ENCODE measurements at regions of chr2 and their contacts with region 1.

Region 1: GRCh38 chr2:86221066-86221684 is 21.9 kb downstream of the MRPL35 start:
- H3K4me3 Mint-ChIP-seq: no peak overlapping the region
- H3K27ac Mint-ChIP-seq: no peak overlapping the region
- H3K4me1 Mint-ChIP-seq: peaks cover 15% of the 10 kb centered on the region
- H3K27me3 Mint-ChIP-seq: no peaks in the 10 kb centered on the region

Region 2: DNA sequence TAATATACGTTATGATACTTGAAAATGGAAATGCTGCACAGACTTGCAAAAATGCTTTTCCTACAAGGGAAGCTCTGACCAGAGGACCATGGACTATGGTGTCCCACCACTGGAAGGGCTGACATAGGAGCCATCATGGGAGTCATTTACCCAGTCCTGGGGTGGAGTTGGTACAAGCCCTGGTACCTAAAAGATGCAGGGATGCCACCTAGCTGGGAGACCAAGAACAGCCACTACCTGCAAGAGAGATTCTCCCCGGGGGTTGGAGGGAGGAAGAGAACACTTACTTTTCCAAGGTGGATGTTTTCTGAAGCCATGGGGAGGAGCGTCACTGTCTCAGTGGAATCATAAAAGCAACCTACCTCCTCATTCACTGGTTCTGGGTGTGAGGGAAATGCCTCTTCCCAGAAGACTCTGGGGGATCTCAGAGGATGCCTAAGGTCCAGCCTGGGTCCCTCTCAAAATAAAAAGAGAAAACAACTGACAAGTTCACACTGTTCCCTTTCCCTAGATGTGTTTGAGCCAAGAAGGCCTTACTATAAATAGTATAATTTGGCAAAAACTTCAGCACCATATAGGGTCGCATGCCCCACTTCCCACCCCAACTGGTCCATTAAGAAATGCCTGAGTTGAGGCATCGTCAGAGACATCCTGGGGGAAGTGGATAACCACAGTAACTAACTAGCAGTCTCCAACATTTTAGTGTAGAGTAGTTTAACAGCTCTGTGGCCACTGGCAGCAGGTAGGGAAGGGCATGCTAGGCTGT is 76.4 kb after region 1 on chr2:
- intact Hi-C with region 1: loop called (anchors 2 kb)
- H3K4me3 Mint-ChIP-seq: no peak overlapping the region
- H3K27ac Mint-ChIP-seq: no peak overlapping the region
- H3K4me1 Mint-ChIP-seq: no peaks in the 10 kb centered on the region
- H3K27me3 Mint-ChIP-seq: peaks cover 33% of the 10 kb centered on the region

Region 3: DNA sequence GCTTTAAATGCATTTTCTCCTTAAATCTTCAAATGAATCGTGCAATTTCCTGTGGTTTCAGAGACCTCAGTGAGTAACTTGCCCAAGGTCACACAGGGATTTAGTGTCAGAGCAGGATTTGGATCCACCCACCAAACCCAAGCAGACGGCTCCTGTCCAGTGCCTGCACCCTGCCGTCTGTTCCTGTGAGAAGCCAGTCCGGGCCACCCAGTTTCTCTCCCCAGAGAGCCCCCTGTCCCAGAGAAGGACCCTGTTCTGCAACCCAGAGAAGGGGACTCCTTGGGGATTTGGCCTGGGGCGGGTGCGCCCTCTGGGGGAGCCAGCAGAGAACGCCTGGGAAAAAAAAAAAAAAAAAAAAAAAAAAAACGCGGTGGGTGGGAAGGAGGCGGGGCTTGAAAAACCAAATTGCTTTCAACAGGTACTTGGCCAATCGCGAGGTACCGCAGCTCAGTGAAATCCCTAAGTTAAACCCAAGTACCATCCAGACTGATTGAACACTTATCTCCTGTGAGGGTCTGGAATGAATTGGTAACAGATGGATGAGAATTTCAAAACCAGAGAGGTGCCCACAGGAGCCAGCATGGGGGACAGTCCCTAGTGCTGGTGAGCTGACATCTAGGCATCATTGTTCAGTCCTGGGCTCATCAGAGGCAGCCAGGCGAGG is 147.1 kb after region 1 on chr2:
- intact Hi-C with region 1: loop called (anchors 1 kb)
- H3K4me3 Mint-ChIP-seq: no peak overlapping the region
- H3K27ac Mint-ChIP-seq: no peak overlapping the region
- H3K4me1 Mint-ChIP-seq: peaks cover 21% of the 10 kb centered on the region
- H3K27me3 Mint-ChIP-seq: peaks cover 3% of the 10 kb centered on the region

Measured in dendritic cell treated with granulocyte-macrophage colony-stimulating factor and Interleukin-4, amounts not matched to agents 40 ng/mL and 50 ng/mL, for 4 days (primary cell).